ENCODE measurements at regions of chr11 and their contacts with region 1.

Region 1: DNA sequence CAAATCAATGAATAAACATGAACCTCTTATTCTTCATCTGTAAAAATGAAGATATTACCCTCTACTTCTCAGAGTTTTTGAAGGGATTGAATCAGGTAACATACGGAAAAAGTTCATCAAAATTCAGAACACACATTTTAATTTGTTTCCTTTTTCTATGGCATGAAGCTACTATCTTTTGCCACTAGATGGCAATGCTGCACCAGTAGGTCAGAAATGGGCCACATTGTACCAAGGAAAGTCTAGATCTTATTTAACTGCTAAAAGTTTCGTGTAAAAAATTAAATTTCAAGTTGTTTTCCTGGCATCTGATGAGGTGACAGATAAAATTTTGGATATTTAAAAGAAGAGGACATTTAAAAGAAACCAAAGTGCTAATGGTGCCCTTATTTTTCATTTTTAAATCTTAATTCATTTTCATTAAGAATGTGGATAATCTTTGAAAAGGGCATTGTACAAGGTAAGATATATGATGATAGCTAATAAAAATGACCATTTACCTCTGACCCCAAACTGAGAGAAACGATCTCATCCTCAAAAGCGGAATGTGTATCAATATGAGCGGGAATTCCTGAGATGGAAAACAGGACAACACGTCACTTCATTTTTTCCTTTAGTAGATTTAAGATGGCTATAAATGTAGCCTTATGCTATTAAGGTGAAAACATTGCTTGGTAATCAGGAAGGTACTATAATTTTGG is 16.1 kb downstream of the ALKBH8 start:
- DNase-seq: peak; percentile 37 to 69 (median 60)
- H3K4me3 ChIP-seq: no peak overlapping the region
- H3K27ac ChIP-seq: no peak overlapping the region
- H3K4me1 ChIP-seq: peaks cover 0 to 3% (median 1%) of the 10 kb centered on the region in 4 experiments
- H3K27me3 ChIP-seq: no peaks in the 10 kb centered on the region

Region 2: GRCh38 chr11:107565219-107565937 is 16.0 kb after region 1 on chr11 and contains the start of gene ALKBH8:
- CTCF ChIA-PET with region 1: interaction called, 43 read pairs
- POLR2A ChIA-PET with region 1: no interaction called
- DNase-seq: peak; percentile 69 to 87 (median 83)
- H3K4me3 ChIP-seq: peak within 1 kb of the TSS; percentile 81 to 100 (median 95)
- H3K27ac ChIP-seq: peak within 1 kb of the TSS; percentile 53 to 87
- H3K4me1 ChIP-seq: peaks cover 15 to 35% (median 23%) of the 10 kb centered on the region in 4 experiments
- H3K27me3 ChIP-seq: peaks cover 0 to 2% (median 0%) of the 10 kb centered on the region in 5 experiments

Measured in common myeloid progenitor, CD34-positive (primary cell).